ENCODE measurements at regions of chr1 and their contacts with region 1.

Region 1: DNA sequence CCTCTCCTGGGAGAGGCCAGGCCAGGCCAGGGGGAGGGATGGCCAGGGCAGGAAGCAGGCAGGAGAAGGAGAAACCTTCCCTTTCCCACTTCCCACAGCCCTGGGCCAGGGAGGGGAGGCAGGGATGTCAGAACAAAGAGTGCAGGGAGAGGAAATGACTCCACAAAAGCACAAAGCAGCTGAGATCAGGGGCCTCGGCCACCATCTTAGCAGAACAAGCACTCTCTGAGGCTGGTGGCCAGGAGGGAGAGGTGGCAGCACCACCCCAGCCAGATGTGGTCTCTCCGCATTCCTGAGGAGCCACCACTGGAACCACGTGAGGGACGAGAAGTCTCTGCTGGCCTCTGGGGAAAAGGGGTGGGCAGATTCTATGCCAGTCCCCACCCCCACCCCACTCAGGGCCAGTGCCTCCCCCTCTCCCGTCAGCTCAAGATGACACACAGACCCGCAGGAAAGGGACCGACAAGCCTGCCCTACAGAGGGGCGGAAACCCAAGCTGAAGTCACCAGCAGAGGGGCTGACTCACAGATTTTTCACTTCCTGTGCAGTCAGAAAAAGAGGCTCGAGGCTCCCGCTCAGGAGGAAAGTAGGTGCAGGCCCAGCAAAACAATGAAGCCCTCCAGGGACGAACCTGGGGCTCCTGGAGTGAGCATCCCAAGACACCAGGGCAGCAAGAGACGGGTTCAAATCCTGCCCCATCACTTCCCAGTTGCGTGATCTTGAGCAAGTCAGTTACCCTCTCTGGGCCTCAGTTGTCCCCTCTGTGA is 24.1 kb upstream of the ALDH4A1 start:
- DNase-seq: peak; percentile 80
- ATAC-seq: peak; percentile 90
- H3K4me3 ChIP-seq: peak overlapping the region; percentile 68
- H3K27ac ChIP-seq: peak overlapping the region; percentile 98
- H3K4me1 ChIP-seq: peaks cover 55% of the 10 kb centered on the region
- H3K27me3 ChIP-seq: no peaks in the 10 kb centered on the region
- CTCF ChIP-seq: peak in 1 of 3 experiments; percentile 5; a peak in 1 of 6 replicates
- EP300 ChIP-seq: 0 out of 4 replicates have a peak, but pooled peaks of 1 of the 2 experiments have one; percentile 37
- POLR2A ChIP-seq: peak; percentile 68
- RAD21 ChIP-seq: peak; percentile 28; the same call in 1 of the 2 replicates

Region 2: GRCh38 chr1:18794561-18794960 is 131.9 kb before region 1 on chr1:
- CTCF ChIA-PET with region 1: no interaction called
- POLR2A ChIA-PET with region 1: no interaction called
- RAD21 ChIA-PET with region 1: no interaction called
- SMC1A ChIA-PET with region 1: no interaction called
- in situ Hi-C with region 1: no loop called
- intact Hi-C with region 1: no loop called
- DNase-seq: no peak
- ATAC-seq: no peak
- H3K4me3 ChIP-seq: no peak overlapping the region
- H3K27ac ChIP-seq: no peak overlapping the region
- H3K4me1 ChIP-seq: no peaks in the 10 kb centered on the region
- H3K27me3 ChIP-seq: peaks cover 0 to 4% of the 10 kb centered on the region in 2 experiments; a peak in 2 of 4 replicates
- CTCF ChIP-seq: no peak
- EP300 ChIP-seq: no peak
- POLR2A ChIP-seq: no peak
- RAD21 ChIP-seq: no peak

Region 3: GRCh38 chr1:18949686-18950400 is 23.3 kb after region 1 on chr1:
- CTCF ChIA-PET with region 1: interaction called, 57 read pairs
- POLR2A ChIA-PET with region 1: interaction called, 96 read pairs
- RAD21 ChIA-PET with region 1: interaction called, 52 read pairs
- SMC1A ChIA-PET with region 1: interaction called, 45 read pairs
- in situ Hi-C with region 1: no loop called
- intact Hi-C with region 1: loop called (anchors 1 kb)
- DNase-seq: no peak
- ATAC-seq: peak; percentile 7; the same call in 1 of the 3 replicates
- H3K4me3 ChIP-seq: peak overlapping the region; percentile 73
- H3K27ac ChIP-seq: peak overlapping the region; percentile 99
- H3K4me1 ChIP-seq: peaks cover 64% of the 10 kb centered on the region
- H3K27me3 ChIP-seq: no peaks in the 10 kb centered on the region
- CTCF ChIP-seq: peak; percentile 28 to 46 (median 41); a peak in 5 of 6 replicates
- EP300 ChIP-seq: no peak
- POLR2A ChIP-seq: no peak
- RAD21 ChIP-seq: peak; percentile 40

Region 4: GRCh38 chr1:18956369-18957135 is 30.1 kb after region 1 on chr1 and contains the start of gene IFFO2:
- CTCF ChIA-PET with region 1: interaction called, 57 read pairs
- POLR2A ChIA-PET with region 1: interaction called, 96 read pairs
- RAD21 ChIA-PET with region 1: interaction called, 52 read pairs
- SMC1A ChIA-PET with region 1: interaction called, 45 read pairs
- in situ Hi-C with region 1: no loop called
- intact Hi-C with region 1: loop called (anchors 1 kb)
- DNase-seq: peak; percentile 34
- ATAC-seq: peak; percentile 80
- H3K4me3 ChIP-seq: peak within 1 kb of the TSS; percentile 70
- H3K27ac ChIP-seq: peak within 1 kb of the TSS; percentile 8; the same call in 1 of the 2 replicates
- H3K4me1 ChIP-seq: peaks cover 41% of the 10 kb centered on the region
- H3K27me3 ChIP-seq: peaks cover 1 to 3% of the 10 kb centered on the region in 2 experiments; a peak in 3 of 4 replicates
- CTCF ChIP-seq: no peak
- EP300 ChIP-seq: no peak
- POLR2A ChIP-seq: peak; percentile 81
- RAD21 ChIP-seq: no peak
- polyA plus RNA-seq, gene IFFO2: 1.2 to 1.9 TPM

Region 5: GRCh38 chr1:19010995-19011844 is 84.7 kb after region 1 on chr1:
- CTCF ChIA-PET with region 1: interaction called, 12 read pairs
- POLR2A ChIA-PET with region 1: no interaction called
- RAD21 ChIA-PET with region 1: no interaction called
- SMC1A ChIA-PET with region 1: no interaction called
- in situ Hi-C with region 1: no loop called
- intact Hi-C with region 1: no loop called
- DNase-seq: peak; percentile 43
- ATAC-seq: peak; percentile 98
- H3K4me3 ChIP-seq: no peak overlapping the region
- H3K27ac ChIP-seq: no peak overlapping the region
- H3K4me1 ChIP-seq: peaks cover 6% of the 10 kb centered on the region
- H3K27me3 ChIP-seq: no peaks in the 10 kb centered on the region; a peak in 2 of 4 replicates
- CTCF ChIP-seq: no peak
- EP300 ChIP-seq: no peak
- POLR2A ChIP-seq: no peak
- RAD21 ChIP-seq: no peak

Region 6: DNA sequence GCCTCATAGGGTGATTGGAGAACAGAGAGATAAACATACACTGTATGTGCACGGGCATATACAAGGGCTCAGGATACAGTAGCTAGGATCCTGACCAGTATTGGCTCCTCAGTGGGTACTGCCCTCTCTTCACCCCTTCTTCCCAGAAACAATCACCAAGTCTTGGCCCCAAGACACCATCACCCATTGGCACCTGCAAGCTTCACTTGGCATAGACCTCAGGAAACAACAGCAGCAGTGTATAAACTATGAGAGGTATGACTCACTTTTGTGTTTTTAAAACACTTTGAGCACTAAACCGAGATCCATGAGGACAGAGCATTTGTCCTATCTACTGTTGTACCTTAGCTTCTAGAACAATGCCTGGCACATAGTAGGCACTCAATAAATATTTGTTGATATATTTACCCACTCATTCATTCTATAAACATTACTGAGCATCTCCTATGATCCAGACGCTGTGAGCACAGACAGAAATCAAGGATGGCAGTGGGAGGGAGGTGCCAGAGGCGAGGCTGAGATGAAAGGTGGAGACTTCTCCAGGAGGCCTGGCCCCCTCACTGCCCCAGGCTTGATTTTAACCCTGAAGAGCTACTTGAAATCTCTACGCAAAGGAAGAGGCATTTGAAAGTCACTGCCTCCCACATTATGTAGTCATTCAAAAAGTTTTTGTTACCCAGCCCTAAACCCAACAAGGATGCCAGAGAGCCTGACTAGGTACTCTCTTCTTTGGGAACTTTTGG is 1464.3 kb after region 1 on chr1:
- CTCF ChIA-PET with region 1: no interaction called
- POLR2A ChIA-PET with region 1: no interaction called
- RAD21 ChIA-PET with region 1: no interaction called
- SMC1A ChIA-PET with region 1: no interaction called
- in situ Hi-C with region 1: no loop called
- intact Hi-C with region 1: no loop called
- DNase-seq: no peak
- ATAC-seq: no peak
- H3K4me3 ChIP-seq: no peak overlapping the region
- H3K27ac ChIP-seq: no peak overlapping the region
- H3K4me1 ChIP-seq: no peaks in the 10 kb centered on the region
- H3K27me3 ChIP-seq: peaks cover 2 to 3% of the 10 kb centered on the region in 2 experiments; a peak in 3 of 4 replicates
- CTCF ChIP-seq: no peak
- EP300 ChIP-seq: no peak
- POLR2A ChIP-seq: no peak
- RAD21 ChIP-seq: no peak